GM12878 (cell line): ENCODE measurements at regions of chr11 and their contacts with region 1.

Region 1: DNA sequence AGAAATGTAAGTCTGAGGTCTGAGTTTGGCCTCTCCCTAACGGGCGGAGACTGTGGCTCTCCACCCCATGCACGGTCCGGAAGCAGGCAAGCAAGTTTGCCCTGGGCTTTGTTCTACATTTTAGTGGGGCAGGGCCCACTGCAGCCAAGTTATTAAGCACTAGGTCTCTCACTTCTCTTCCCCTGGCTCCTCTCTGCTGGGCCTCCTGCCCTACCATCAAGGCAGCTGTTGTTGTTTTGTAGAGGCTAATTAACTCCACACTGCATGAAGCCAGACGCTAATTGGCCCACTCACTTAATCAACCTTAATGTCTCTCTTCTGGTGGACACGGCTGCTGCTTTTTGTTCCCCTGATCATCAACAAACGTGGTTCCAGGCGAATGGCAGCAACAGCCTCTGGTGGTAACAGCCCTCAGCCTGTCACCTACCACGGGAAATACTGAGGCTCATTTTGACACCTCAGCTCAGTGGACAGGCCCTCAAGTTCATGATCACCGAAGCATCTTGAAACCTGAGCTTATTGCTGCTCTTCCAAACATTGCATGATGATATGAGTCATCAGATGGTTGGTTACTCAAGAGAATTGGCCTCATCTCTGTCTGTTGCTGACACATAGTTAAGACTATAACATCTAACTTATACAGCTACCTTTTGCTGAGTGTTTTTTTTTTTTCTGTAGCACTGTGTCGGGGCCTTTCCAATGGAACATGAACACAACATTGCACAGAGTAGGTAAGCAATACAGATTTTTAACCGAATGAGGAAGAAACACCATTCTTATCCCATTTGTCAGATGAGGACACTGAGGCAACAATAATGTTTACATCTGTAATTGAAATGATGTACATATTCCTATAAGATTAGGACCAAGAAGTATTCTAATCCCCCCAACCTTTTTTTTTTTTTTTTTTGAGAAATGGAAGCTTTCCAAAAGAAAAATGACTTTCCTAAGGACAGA is 20.8 kb upstream of the LMO2 start:
- DNase-seq: peak; percentile 82
- ATAC-seq: peak; percentile 98
- H3K4me3 ChIP-seq: no peak overlapping the region
- H3K27ac ChIP-seq: peak overlapping the region; percentile 82
- H3K4me1 ChIP-seq: peaks cover 12% of the 10 kb centered on the region
- H3K27me3 ChIP-seq: no peaks in the 10 kb centered on the region
- CTCF ChIP-seq: no peak
- EP300 ChIP-seq: 0 out of 4 replicates have a peak, but pooled peaks have one; percentile 16 to 45
- POLR2A ChIP-seq: peak; percentile 39; the same call in 1 of the 2 replicates
- RAD21 ChIP-seq: no peak

Region 2: DNA sequence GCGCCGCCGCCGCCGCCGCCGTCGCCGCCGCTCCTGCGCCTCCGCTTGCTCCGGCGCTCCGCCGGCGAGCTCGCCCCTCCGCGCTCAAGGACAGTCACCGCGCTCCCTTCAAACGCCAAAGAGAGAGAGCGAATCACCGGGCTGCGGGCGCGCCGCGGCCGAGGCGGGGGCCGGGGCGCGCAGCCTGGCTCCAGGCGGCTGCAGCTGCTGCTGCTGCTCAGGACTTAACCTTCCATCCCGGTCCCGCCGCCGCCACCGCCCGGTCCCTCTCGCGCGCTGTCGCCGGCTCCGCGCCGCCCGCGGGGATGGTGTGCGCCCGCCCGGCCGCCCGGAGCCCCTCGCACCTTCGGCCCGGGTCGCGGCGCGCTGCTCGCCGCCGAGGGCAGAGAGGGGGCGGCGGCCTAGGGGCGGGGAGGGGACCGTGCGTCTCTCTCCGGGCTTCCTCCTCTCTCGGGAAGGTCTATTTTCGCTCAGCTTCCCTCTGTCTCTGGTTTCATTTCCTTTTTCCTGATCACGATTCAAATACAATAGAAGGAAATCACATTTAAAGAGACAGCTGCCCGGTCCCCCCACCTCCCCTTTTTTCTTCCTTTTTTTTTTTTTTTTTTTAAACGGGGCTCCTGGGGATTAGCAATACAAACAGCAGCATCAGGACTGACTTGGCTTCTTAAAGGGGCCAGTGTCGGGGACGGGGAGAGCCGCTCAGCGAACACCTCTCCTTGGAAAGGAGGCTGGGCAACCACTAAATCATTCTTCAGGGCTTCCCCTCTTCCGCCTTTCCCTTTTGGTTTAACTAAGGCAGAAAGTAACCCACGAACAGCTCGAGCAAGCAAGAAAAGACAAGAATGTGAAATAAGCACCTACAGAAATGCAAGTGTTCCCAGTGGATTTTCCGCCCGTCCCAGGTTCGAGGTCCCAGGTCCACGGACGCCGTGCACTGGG is 42.9 kb before region 1 on chr11:
- CTCF ChIA-PET with region 1: no interaction called
- POLR2A ChIA-PET with region 1: interaction called, 4 read pairs
- RAD21 ChIA-PET with region 1: no interaction called
- SMC1A ChIA-PET with region 1: interaction called, 6 read pairs
- in situ Hi-C with region 1: no loop called
- intact Hi-C with region 1: loop called (anchors 5 kb)
- DNase-seq: no peak
- ATAC-seq: peak; percentile 61
- H3K4me3 ChIP-seq: peak overlapping the region; percentile 75
- H3K27ac ChIP-seq: no peak overlapping the region
- H3K4me1 ChIP-seq: peaks cover 4% of the 10 kb centered on the region
- H3K27me3 ChIP-seq: peaks cover 4 to 8% of the 10 kb centered on the region in 2 experiments
- CTCF ChIP-seq: no peak
- EP300 ChIP-seq: no peak
- POLR2A ChIP-seq: no peak
- RAD21 ChIP-seq: no peak